H1 (cell line): ENCODE measurements at regions of chr3 and their contacts with region 1.

Region 1: DNA sequence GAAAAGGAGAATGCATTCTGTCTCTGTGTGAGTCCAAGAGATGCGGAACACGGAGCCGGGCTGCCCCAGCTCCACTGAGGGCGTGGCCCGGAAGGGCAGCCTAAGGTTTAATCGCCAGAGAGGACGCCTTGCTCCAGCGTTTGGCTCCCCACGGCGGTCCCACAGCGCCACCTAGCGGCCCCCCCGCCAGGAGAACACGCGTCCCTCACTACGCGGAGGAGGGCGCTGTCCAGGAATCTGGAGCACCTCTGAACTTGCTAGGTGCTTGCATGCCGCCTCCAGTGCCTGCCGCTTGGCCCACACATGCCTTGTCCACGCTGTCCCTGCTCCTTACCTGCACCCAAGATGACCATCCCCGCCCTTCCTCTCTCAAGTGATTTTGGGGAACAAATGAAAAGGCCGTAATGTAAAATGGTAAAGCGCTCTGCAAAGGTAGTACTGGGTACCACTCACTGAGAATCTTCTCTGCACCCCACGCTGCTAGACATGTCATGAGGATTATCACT is 14.4 kb upstream of the MRPS22 start:
- DNase-seq: peak; percentile 57 to 99
- H3K4me3 ChIP-seq: peak overlapping the region in 2 of 4 experiments; percentile 14 to 45; a peak in 2 of 8 replicates
- H3K27ac ChIP-seq: no peak overlapping the region
- H3K4me1 ChIP-seq: no peaks in the 10 kb centered on the region
- H3K27me3 ChIP-seq: peaks cover 0 to 5% (median 4%) of the 10 kb centered on the region in 4 experiments; a peak in 3 of 7 replicates
- CTCF ChIP-seq: peak; percentile 99 to 100 (median 99)
- EP300 ChIP-seq: no peak
- POLR2A ChIP-seq: no peak
- RAD21 ChIP-seq: peak; percentile 97 to 99

Region 2: GRCh38 chr3:139312959-139313358 is 16.4 kb before region 1 on chr3:
- CTCF ChIA-PET with region 1: interaction called, 58 read pairs
- POLR2A ChIA-PET with region 1: no interaction called
- DNase-seq: no peak
- H3K4me3 ChIP-seq: no peak overlapping the region
- H3K27ac ChIP-seq: no peak overlapping the region
- H3K4me1 ChIP-seq: peaks cover 0 to 6% (median 2%) of the 10 kb centered on the region in 4 experiments; a peak in 5 of 7 replicates
- H3K27me3 ChIP-seq: no peaks in the 10 kb centered on the region
- CTCF ChIP-seq: no peak
- EP300 ChIP-seq: no peak
- POLR2A ChIP-seq: no peak
- RAD21 ChIP-seq: no peak

Region 3: GRCh38 chr3:139353920-139354556 is 24.6 kb after region 1 on chr3:
- CTCF ChIA-PET with region 1: interaction called, 12 read pairs
- POLR2A ChIA-PET with region 1: no interaction called
- DNase-seq: no peak
- H3K4me3 ChIP-seq: no peak overlapping the region
- H3K27ac ChIP-seq: no peak overlapping the region
- H3K4me1 ChIP-seq: no peaks in the 10 kb centered on the region
- H3K27me3 ChIP-seq: no peaks in the 10 kb centered on the region; a peak in 1 of 7 replicates
- CTCF ChIP-seq: peak in 2 of 3 experiments; percentile 79 to 89; a peak in 3 of 4 replicates
- EP300 ChIP-seq: no peak
- POLR2A ChIP-seq: no peak
- RAD21 ChIP-seq: peak in 1 of 2 experiments; percentile 37; a peak in 1 of 4 replicates

Region 4: GRCh38 chr3:139364549-139364948 is 35.2 kb after region 1 on chr3:
- CTCF ChIA-PET with region 1: no interaction called
- POLR2A ChIA-PET with region 1: no interaction called
- DNase-seq: no peak
- H3K4me3 ChIP-seq: no peak overlapping the region
- H3K27ac ChIP-seq: no peak overlapping the region
- H3K4me1 ChIP-seq: no peaks in the 10 kb centered on the region
- H3K27me3 ChIP-seq: no peaks in the 10 kb centered on the region
- CTCF ChIP-seq: no peak
- EP300 ChIP-seq: no peak
- POLR2A ChIP-seq: no peak
- RAD21 ChIP-seq: no peak